ENCODE measurements at regions of chr19 and their contacts with region 1.

Region 1: DNA sequence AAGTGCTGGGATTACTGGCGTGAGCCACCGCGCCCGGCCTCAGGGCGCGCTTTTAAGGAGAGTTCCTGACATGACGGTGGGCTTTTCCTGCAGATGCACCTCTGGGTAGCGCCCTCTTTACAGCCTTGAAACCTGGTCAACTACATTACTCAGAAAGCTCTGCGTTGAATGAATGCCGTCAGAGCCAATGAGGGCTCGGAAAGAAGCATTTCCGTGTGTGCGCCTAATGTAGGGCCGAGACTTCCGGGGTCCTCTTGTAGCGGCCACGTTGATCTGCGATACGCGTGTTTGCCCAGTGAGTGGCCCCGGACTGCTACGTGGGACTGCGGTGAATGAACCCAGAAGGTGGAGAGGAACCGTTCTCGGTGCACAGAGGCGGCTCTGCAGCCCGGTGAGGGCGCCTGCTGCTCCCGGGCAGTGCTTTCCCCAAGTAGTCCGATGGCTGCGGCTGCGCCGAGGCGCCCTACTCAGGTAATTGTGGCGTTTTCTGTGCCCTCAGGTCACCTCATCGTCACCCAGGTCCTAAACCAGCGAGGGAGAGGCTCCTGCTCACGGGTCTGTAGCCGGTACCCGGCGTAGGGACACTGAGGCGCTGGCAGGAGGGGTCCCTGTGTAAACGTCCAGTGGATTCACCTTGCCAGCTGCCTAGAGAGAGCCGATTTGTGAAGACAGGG is 4.9 kb upstream of the ZNF552 start:
- DNase-seq: peak; percentile 85
- H3K4me3 Mint-ChIP-seq: peak overlapping the region; percentile 91
- H3K27ac Mint-ChIP-seq: peak overlapping the region; percentile 82
- H3K4me1 Mint-ChIP-seq: peaks cover 59% of the 10 kb centered on the region
- H3K27me3 Mint-ChIP-seq: no peaks in the 10 kb centered on the region
- CTCF ChIP-seq: no peak

Region 2: DNA sequence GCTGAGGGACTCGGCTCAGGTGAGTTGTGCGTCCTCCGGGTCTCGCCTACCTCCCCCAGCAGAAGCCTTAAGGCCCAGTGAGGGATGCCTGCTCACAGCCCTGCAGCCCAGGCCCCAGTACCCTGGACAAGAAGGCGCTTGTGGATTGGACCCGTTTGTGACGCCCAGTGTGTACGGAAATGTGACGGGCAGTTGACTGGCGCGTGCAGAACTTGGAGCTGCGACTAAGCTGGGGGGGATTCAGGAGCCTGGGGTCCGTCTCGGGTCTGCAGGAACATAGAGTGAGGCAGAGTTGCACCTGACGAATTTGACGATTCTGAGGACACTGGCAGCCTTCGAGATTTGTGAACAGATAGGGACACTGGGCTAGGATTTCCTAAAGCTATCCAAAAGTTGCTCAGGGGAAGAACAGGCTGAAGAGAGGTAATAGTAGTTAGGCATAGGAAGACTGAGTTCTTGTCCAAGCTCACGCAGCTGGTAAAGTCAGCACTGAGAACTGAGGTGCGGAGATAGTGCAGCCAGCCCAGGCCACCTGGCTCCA is 137.3 kb before region 1 on chr19:
- CTCF ChIA-PET with region 1: interaction called, 6 read pairs
- intact Hi-C with region 1: loop called (anchors 10 kb)
- DNase-seq: no peak
- H3K4me3 Mint-ChIP-seq: peak overlapping the region; percentile 84
- H3K27ac Mint-ChIP-seq: peak overlapping the region; percentile 37
- H3K4me1 Mint-ChIP-seq: peaks cover 19% of the 10 kb centered on the region
- H3K27me3 Mint-ChIP-seq: no peaks in the 10 kb centered on the region
- CTCF ChIP-seq: no peak

Region 3: DNA sequence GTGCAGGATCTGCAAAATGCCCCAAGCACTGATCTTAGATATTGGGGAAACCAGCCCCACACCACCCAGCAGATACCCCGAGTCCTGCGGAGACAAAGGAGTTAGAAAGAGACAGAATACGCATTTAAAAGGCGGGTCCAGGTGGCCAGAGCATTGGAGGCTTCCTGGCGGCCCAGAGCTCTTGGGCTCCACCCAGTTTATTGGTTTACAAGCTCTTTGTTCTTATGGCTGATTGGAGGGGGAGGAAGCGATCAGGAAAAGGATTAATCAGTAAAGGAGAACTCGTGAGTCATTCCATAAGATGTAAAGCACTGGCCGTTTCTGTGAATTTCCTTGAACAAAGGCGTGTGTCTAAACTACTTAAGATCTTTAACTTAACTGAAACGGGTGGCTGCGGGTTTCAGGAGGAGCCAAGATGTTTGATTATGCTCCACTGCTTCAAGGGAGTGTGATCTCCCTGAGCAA is 31.0 kb after region 1 on chr19:
- CTCF ChIA-PET with region 1: interaction called, 6 read pairs
- intact Hi-C with region 1: loop called (anchors 5 kb)
- DNase-seq: peak; percentile 72
- H3K4me3 Mint-ChIP-seq: peak overlapping the region; percentile 94
- H3K27ac Mint-ChIP-seq: peak overlapping the region; percentile 83
- H3K4me1 Mint-ChIP-seq: peaks cover 13% of the 10 kb centered on the region
- H3K27me3 Mint-ChIP-seq: no peaks in the 10 kb centered on the region
- CTCF ChIP-seq: no peak

Region 4: DNA sequence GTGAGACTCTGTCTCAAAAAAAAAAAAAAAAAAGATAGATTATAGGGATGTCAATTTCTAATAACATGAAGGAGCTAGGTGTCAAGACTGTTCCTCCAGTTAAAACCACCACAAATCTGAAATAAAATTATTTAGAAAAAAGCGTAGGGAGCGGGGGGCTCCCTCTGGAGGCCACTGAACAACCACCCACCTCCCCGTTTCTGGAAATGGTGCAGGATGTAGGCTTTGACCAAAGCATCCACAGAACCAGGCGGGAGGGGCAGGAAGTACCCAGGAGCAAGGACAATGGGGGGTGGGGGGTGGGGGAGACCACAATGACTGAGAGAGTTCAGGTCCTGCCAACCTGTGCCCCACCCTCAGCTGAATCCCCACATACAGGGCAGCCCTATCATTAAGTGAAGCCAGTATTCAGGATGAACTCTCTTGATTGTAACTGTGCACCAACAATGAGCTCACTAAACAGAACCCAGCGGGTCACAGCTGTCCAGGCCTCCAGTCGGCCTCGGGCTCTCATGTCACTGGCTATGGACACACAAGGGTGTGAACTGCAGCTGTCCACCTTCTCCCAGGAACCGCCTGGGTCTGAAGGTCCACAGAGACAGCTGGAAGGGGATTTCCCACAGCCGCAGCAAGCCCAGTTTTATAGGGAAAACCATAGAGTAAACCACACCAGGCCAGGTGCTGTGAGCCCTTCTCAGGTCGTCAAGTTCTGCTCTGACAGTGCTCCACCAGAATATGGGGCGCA is 271.8 kb after region 1 on chr19:
- CTCF ChIA-PET with region 1: no interaction called
- intact Hi-C with region 1: no loop called
- DNase-seq: no peak
- H3K4me3 Mint-ChIP-seq: no peak overlapping the region
- H3K27ac Mint-ChIP-seq: no peak overlapping the region
- H3K4me1 Mint-ChIP-seq: no peaks in the 10 kb centered on the region
- H3K27me3 Mint-ChIP-seq: no peaks in the 10 kb centered on the region
- CTCF ChIP-seq: no peak

Region 5: GRCh38 chr19:58154679-58155648 is 335.4 kb after region 1 on chr19:
- CTCF ChIA-PET with region 1: interaction called, 4 read pairs
- intact Hi-C with region 1: loop called (anchors 2 kb)
- DNase-seq: peak; percentile 99
- H3K4me3 Mint-ChIP-seq: peak overlapping the region; percentile 82
- H3K27ac Mint-ChIP-seq: peak overlapping the region; percentile 54
- H3K4me1 Mint-ChIP-seq: peaks cover 18% of the 10 kb centered on the region
- H3K27me3 Mint-ChIP-seq: no peaks in the 10 kb centered on the region
- CTCF ChIP-seq: peak; percentile 97

Measured in Calu3 (cell line).